ENCODE measurements at regions of chr9 and their contacts with region 1.

Region 1: GRCh38 chr9:38707885-38708637 is 11.9 kb downstream of the FAM240B start:
- DNase-seq: no peak
- ATAC-seq: peak; percentile 75
- H3K4me3 ChIP-seq: no peak overlapping the region
- H3K27ac ChIP-seq: no peak overlapping the region
- H3K4me1 ChIP-seq: no peaks in the 10 kb centered on the region
- H3K27me3 ChIP-seq: no peaks in the 10 kb centered on the region
- CTCF ChIP-seq: peak; percentile 33 to 53 (median 37); a peak in 5 of 6 replicates
- EP300 ChIP-seq: no peak
- POLR2A ChIP-seq: no peak
- RAD21 ChIP-seq: peak; percentile 40

Region 2: GRCh38 chr9:38641985-38642864 is 65.8 kb before region 1 on chr9:
- CTCF ChIA-PET with region 1: interaction called, 77 read pairs
- POLR2A ChIA-PET with region 1: no interaction called
- RAD21 ChIA-PET with region 1: interaction called, 14 read pairs
- SMC1A ChIA-PET with region 1: interaction called, 17 read pairs
- in situ Hi-C with region 1: loop called (anchors 10 kb)
- intact Hi-C with region 1: loop called (anchors 5 kb)
- DNase-seq: no peak
- ATAC-seq: peak; percentile 89
- H3K4me3 ChIP-seq: no peak overlapping the region
- H3K27ac ChIP-seq: no peak overlapping the region
- H3K4me1 ChIP-seq: no peaks in the 10 kb centered on the region
- H3K27me3 ChIP-seq: no peaks in the 10 kb centered on the region
- CTCF ChIP-seq: peak; percentile 30 to 54 (median 37); a peak in 5 of 6 replicates
- EP300 ChIP-seq: no peak
- POLR2A ChIP-seq: no peak
- RAD21 ChIP-seq: peak; percentile 65

Region 3: GRCh38 chr9:38687387-38687842 is 20.6 kb before region 1 on chr9:
- CTCF ChIA-PET with region 1: interaction called, 16 read pairs
- POLR2A ChIA-PET with region 1: no interaction called
- RAD21 ChIA-PET with region 1: interaction called, 4 read pairs
- SMC1A ChIA-PET with region 1: interaction called, 27 read pairs
- in situ Hi-C with region 1: no loop called
- intact Hi-C with region 1: no loop called
- DNase-seq: no peak
- ATAC-seq: peak; percentile 35; the same call in 2 of the 3 replicates
- H3K4me3 ChIP-seq: no peak overlapping the region
- H3K27ac ChIP-seq: no peak overlapping the region
- H3K4me1 ChIP-seq: no peaks in the 10 kb centered on the region
- H3K27me3 ChIP-seq: no peaks in the 10 kb centered on the region
- CTCF ChIP-seq: no peak
- EP300 ChIP-seq: no peak
- POLR2A ChIP-seq: no peak
- RAD21 ChIP-seq: no peak